Activated naive CD4-positive, alpha-beta T cell treated with anti-CD3 and anti-CD28 coated beads for 36 hours (primary cell): ENCODE measurements at regions of chr10 and their contacts with region 1.

Region 1: GRCh38 chr10:113704637-113705343 is 25.1 kb downstream of the CASP7 start:
- DNase-seq: peak; percentile 41
- H3K4me3 Mint-ChIP-seq: no peak overlapping the region
- H3K27ac Mint-ChIP-seq: no peak overlapping the region
- H3K4me1 Mint-ChIP-seq: peaks cover 18% of the 10 kb centered on the region
- H3K27me3 Mint-ChIP-seq: no peaks in the 10 kb centered on the region

Region 2: GRCh38 chr10:113780681-113781250 is 76.0 kb after region 1 on chr10:
- CTCF ChIA-PET with region 1: no interaction called
- intact Hi-C with region 1: loop called (anchors 2 kb)
- DNase-seq: no peak
- H3K4me3 Mint-ChIP-seq: no peak overlapping the region
- H3K27ac Mint-ChIP-seq: no peak overlapping the region
- H3K4me1 Mint-ChIP-seq: no peaks in the 10 kb centered on the region
- H3K27me3 Mint-ChIP-seq: peaks cover 8% of the 10 kb centered on the region

Region 3: GRCh38 chr10:113802997-113803396 is 98.2 kb after region 1 on chr10:
- CTCF ChIA-PET with region 1: interaction called, 5 read pairs
- intact Hi-C with region 1: loop called (anchors 1 kb)
- DNase-seq: no peak
- H3K4me3 Mint-ChIP-seq: no peak overlapping the region
- H3K27ac Mint-ChIP-seq: no peak overlapping the region
- H3K4me1 Mint-ChIP-seq: no peaks in the 10 kb centered on the region
- H3K27me3 Mint-ChIP-seq: peaks cover 10% of the 10 kb centered on the region

Region 4: GRCh38 chr10:114103284-114103683 is 398.5 kb after region 1 on chr10:
- CTCF ChIA-PET with region 1: interaction called, 4 read pairs
- intact Hi-C with region 1: loop called (anchors 1 kb)
- DNase-seq: no peak
- H3K4me3 Mint-ChIP-seq: no peak overlapping the region
- H3K27ac Mint-ChIP-seq: no peak overlapping the region
- H3K4me1 Mint-ChIP-seq: peaks cover 18% of the 10 kb centered on the region
- H3K27me3 Mint-ChIP-seq: peaks cover 31% of the 10 kb centered on the region

Region 5: GRCh38 chr10:114239117-114239993 is 534.6 kb after region 1 on chr10 and contains the start of gene VWA2:
- CTCF ChIA-PET with region 1: no interaction called
- intact Hi-C with region 1: loop called (anchors 1 kb)
- DNase-seq: peak; percentile 55
- H3K4me3 Mint-ChIP-seq: peak within 1 kb of the TSS; percentile 43
- H3K27ac Mint-ChIP-seq: no peak within 1 kb of the TSS
- H3K4me1 Mint-ChIP-seq: peaks cover 8% of the 10 kb centered on the region
- H3K27me3 Mint-ChIP-seq: peaks cover 52% of the 10 kb centered on the region
- total RNA-seq, gene VWA2: not detected